Posterior cingulate gyrus (tissue), 11 donors: ENCODE measurements at regions of chr5 and their contacts with region 1.

Region 1: DNA sequence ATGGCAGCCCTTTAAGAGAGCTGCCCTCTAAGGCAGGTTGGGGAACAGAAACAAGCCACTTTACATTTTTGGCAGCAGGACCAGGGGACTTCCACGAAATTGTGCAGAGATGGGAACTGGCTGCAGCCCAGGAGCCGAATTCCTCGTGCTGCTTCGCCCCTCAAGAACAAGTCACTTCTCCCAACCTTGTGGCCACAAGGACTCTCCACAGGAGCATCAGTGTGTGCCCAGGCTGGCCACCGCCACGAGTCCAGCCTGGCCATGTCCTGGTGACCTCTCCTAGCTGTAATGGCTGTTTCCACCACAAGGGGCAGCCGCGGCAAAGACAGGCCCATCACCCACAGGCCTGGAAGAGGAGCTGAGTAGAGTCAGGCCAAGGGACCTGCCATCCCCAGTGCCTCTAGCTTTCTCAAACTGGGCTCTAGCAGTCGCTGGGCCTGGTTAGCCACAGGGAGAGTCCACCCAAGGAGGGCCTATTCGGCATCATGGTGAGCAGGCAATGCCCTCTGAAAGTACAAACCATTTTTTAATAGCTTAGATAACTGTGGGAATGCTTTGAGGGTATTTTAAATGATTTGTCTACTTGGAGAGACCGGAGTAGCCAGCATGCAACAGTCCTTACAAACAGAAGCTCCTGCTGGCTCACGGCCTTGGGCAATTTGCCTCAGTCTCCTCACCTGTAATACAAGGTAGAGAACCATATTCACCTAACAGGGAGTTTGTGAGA is 129.0 kb downstream of the COL23A1 start:
- DNase-seq: peak; percentile 45 to 94 (median 76)

Region 2: GRCh38 chr5:178232124-178232919 is 228.8 kb before region 1 on chr5 and contains the start of gene PHYKPL:
- intact Hi-C with region 1: no loop called
- DNase-seq: peak; percentile 48 to 95 (median 62)

Region 3: DNA sequence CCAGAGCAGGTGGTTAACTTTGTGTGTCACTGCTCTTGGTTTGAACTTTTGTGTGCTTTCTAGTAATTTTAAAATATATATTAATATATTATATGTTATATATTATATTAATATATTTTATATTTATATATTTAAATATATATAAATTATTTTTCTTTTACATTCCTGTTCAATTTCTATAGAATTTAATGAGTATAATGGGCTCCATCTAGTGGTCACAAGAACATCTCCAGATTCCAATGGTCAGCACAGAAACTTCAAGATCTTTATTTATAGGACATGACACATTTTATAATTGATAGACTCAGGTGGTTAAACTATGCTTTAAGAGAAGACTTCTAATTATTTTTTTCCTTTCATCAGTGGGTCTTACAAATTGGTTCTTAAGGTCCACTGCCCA is 89.9 kb after region 1 on chr5:
- intact Hi-C with region 1: loop called (anchors 5 kb)
- DNase-seq: no peak